Left ventricle myocardium superior (tissue), 1 donor: ENCODE measurements at regions of chr17 and their contacts with region 1.

Region 1: DNA sequence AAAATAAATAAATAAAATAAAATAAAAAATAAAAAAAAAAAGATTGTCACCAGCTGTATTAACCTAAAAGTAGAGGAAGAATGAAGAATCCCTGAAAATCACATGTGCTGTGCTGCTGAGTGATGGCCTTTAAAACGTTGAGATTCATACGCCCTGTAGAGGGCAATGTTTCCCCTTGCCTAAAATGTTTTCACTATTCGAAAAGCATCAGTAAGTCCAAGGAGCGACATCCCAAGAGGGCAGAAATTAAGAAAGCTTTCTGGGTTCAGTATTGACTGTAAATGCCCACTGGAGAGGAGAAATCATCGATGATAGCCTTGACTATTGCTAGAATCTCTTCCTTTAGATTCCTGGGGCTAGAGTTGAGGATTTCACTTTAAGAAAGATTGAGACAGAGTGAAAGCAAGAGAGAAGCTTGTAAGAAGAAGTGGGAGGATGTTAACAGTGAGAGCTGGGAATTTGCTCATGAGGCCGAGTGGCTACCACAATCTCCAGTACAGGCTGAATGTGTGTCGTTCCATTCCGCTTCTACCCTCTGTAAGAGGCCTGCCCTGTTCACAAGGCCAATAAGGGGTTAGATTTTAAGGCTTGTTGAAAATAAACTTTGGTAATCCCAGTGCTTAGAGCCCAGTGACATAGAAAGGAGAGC is 170.8 kb upstream of the FAM20A start:
- DNase-seq: no peak
- ATAC-seq: peak; percentile 84

Region 2: GRCh38 chr17:68961214-68961882 is 189.4 kb after region 1 on chr17:
- intact Hi-C with region 1: loop called (anchors 10 kb)
- DNase-seq: peak; percentile 72
- ATAC-seq: peak; percentile 93